Prostate gland (tissue), 2 donors: ENCODE measurements at regions of chr4 and their contacts with region 1.

Region 1: GRCh38 chr4:125314676-125315575 is at the start of gene FAT4:
- DNase-seq: peak; percentile 87
- H3K4me3 ChIP-seq: peak within 1 kb of the TSS; percentile 69 to 76
- H3K27ac ChIP-seq: peak within 1 kb of the TSS; percentile 78 to 81
- H3K4me1 ChIP-seq: no peaks in the 10 kb centered on the region
- H3K27me3 ChIP-seq: no peaks in the 10 kb centered on the region
- CTCF ChIP-seq: peak in 3 of 4 experiments; percentile 21 to 34 (median 25)
- POLR2A ChIP-seq: peak; percentile 57
- total RNA-seq, gene FAT4: 5.4 to 10.3 TPM

Region 2: GRCh38 chr4:124079174-124079780 is 1235.6 kb before region 1 on chr4:
- intact Hi-C with region 1: no loop called
- DNase-seq: no peak
- H3K4me3 ChIP-seq: no peak overlapping the region
- H3K27ac ChIP-seq: no peak overlapping the region
- H3K4me1 ChIP-seq: no peaks in the 10 kb centered on the region
- H3K27me3 ChIP-seq: no peaks in the 10 kb centered on the region
- CTCF ChIP-seq: no peak
- POLR2A ChIP-seq: no peak

Region 3: DNA sequence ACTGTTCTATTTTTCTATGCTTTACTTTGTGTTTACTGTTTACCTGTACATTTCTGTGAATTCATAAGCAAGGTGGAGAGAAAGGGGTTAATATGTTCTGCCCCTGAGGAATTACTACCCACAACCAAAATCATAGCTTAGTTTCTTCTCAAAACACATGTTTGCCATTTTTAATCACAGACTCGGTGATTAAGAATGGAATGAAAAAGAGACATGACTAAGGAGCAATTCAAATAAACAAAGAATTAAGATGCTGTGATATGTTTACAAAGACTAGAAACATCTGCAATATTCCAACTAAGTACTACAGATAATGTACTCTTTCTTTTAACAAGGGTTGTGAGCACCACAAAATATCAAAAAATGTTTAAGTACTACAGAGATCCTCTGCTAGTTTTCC is 11.9 kb before region 1 on chr4:
- intact Hi-C with region 1: no loop called
- DNase-seq: no peak
- H3K4me3 ChIP-seq: no peak overlapping the region
- H3K27ac ChIP-seq: no peak overlapping the region
- H3K4me1 ChIP-seq: no peaks in the 10 kb centered on the region
- H3K27me3 ChIP-seq: no peaks in the 10 kb centered on the region
- CTCF ChIP-seq: no peak
- POLR2A ChIP-seq: no peak

Region 4: GRCh38 chr4:125389713-125390112 is 74.8 kb after region 1 on chr4:
- intact Hi-C with region 1: loop called (anchors 5 kb)
- DNase-seq: no peak
- H3K4me3 ChIP-seq: no peak overlapping the region
- H3K27ac ChIP-seq: peak overlapping the region in 1 of 2 donors; percentile 29
- H3K4me1 ChIP-seq: no peaks in the 10 kb centered on the region
- H3K27me3 ChIP-seq: no peaks in the 10 kb centered on the region
- CTCF ChIP-seq: no peak
- POLR2A ChIP-seq: no peak

Region 5: DNA sequence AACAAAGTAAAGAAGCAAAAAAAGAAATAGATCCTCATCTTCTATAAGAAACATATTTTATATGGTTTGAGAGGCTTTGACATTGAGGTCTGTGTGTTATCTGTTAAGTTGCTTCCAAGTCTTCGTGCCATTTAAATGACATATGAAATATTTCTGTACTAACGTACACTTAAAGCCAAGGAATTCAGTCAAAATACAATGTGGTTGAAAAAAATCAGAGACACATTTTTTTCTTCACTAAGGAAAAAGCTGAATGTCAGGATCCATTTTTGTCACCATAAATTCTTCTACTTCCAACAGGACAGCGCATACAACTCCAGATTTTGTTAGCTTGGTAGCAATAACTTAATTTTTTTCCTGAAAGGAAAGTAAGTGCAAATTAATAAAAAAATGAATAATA is 168.4 kb after region 1 on chr4:
- intact Hi-C with region 1: loop called (anchors 2 kb)
- DNase-seq: no peak
- H3K4me3 ChIP-seq: no peak overlapping the region
- H3K27ac ChIP-seq: no peak overlapping the region
- H3K4me1 ChIP-seq: no peaks in the 10 kb centered on the region
- H3K27me3 ChIP-seq: no peaks in the 10 kb centered on the region
- CTCF ChIP-seq: no peak
- POLR2A ChIP-seq: no peak

Region 6: DNA sequence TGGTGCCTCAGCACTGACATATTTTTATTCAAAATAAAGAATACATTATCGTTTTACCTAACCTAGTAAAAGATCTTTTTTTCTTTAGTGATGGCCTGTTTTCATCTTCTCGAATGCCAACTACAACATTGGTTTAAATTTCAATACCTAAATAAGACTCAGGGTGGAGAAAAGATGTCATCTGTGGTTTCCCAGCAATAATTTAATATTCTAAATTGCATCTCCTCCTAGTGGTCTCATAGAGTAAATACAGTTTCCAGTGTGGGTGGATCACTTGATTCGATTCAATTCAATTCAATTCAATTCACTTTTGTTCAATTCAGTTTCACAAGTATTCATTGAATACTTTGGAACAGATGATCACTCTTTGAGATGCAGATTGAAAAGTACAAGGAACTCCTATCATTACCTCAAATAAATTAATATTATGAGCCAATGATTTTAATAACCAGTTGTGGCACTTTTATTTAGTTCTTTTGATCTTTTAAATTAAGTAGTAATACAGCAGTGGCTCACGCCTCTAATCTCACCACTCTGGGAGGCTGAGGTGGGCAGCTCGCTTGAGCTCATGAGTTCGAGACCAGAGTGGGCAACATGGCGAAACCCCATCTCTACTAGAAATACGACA is 427.0 kb after region 1 on chr4:
- intact Hi-C with region 1: loop called (anchors 5 kb)
- DNase-seq: no peak
- H3K4me3 ChIP-seq: no peak overlapping the region
- H3K27ac ChIP-seq: no peak overlapping the region
- H3K4me1 ChIP-seq: no peaks in the 10 kb centered on the region
- H3K27me3 ChIP-seq: no peaks in the 10 kb centered on the region
- CTCF ChIP-seq: peak in 3 of 4 experiments; percentile 47 to 52 (median 48)
- POLR2A ChIP-seq: no peak

Region 7: GRCh38 chr4:126604268-126604867 is 1289.4 kb after region 1 on chr4:
- intact Hi-C with region 1: loop called (anchors 5 kb)
- DNase-seq: no peak
- H3K4me3 ChIP-seq: no peak overlapping the region
- H3K27ac ChIP-seq: no peak overlapping the region
- H3K4me1 ChIP-seq: no peaks in the 10 kb centered on the region
- H3K27me3 ChIP-seq: no peaks in the 10 kb centered on the region
- CTCF ChIP-seq: peak in 3 of 4 experiments; percentile 15 to 38 (median 20)
- POLR2A ChIP-seq: no peak

Region 8: GRCh38 chr4:126957556-126957955 is 1642.6 kb after region 1 on chr4:
- intact Hi-C with region 1: loop called (anchors 10 kb)
- DNase-seq: no peak
- H3K4me3 ChIP-seq: no peak overlapping the region
- H3K27ac ChIP-seq: no peak overlapping the region
- H3K4me1 ChIP-seq: no peaks in the 10 kb centered on the region
- H3K27me3 ChIP-seq: no peaks in the 10 kb centered on the region
- CTCF ChIP-seq: peak in 1 of 4 experiments; percentile 10
- POLR2A ChIP-seq: no peak